ENCODE measurements at regions of chr12 and their contacts with region 1.

Region 1: DNA sequence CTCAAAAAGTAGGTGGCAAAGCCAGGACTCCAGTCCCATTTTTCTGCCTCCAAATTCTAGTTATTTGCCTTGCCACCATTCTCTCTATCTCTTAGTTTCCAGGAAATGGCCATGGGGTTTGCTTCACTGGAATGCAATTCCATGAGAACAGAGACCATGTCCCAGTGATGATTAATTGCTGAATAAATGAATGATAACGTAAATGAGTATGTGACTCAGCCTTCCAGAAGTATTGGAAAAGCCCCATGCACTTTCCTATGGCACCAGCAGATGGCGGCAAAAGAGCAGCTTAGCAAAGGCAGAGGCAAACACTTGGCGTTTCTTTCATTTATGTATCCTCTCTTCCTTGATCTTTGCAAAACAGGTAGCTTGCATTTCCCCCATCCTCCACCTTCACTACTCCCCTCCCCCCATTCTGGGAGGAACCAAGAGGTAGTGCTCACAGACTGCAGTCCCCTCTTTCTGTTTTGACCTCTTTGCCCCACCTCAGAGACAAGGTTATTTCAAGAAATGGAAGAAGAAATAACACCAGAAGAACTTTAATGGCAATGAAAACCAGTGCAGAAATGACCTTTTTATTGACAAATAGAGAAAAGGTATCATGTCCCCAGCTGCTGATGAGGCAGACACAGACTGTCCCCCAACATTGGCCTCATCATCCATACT is 21.3 kb downstream of the TBX3 start:
- DNase-seq: peak; percentile 84
- H3K4me3 ChIP-seq: no peak overlapping the region
- H3K27ac ChIP-seq: no peak overlapping the region
- H3K4me1 ChIP-seq: peaks cover 2% of the 10 kb centered on the region
- H3K27me3 ChIP-seq: peaks cover 22% of the 10 kb centered on the region
- CTCF ChIP-seq: peak; percentile 95

Region 2: DNA sequence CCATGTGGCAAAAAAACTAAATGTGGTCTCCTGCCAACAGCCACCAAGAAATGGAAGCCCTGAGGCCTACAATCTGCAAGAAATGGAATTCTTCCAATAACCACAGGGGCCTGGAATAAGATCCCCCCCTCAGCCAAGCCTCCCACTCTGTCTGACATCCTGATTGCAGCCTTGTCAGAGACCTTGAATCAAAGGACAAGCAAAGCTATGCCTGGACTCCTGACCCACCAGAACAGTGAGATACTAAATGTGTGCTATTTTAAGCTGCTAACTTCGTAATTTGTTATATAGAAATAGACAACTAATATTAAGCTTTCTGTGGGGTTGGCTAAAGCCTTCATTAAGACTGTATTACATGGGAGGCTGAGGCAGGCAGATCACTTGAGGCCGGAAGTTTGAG is 334.4 kb before region 1 on chr12:
- intact Hi-C with region 1: no loop called
- DNase-seq: no peak
- H3K4me3 ChIP-seq: no peak overlapping the region
- H3K27ac ChIP-seq: no peak overlapping the region
- H3K4me1 ChIP-seq: no peaks in the 10 kb centered on the region
- H3K27me3 ChIP-seq: no peaks in the 10 kb centered on the region
- CTCF ChIP-seq: no peak

Region 3: GRCh38 chr12:115166698-115167315 is 504.2 kb after region 1 on chr12:
- intact Hi-C with region 1: loop called (anchors 10 kb)
- DNase-seq: no peak
- H3K4me3 ChIP-seq: no peak overlapping the region
- H3K27ac ChIP-seq: no peak overlapping the region
- H3K4me1 ChIP-seq: no peaks in the 10 kb centered on the region
- H3K27me3 ChIP-seq: no peaks in the 10 kb centered on the region
- CTCF ChIP-seq: no peak

Region 4: DNA sequence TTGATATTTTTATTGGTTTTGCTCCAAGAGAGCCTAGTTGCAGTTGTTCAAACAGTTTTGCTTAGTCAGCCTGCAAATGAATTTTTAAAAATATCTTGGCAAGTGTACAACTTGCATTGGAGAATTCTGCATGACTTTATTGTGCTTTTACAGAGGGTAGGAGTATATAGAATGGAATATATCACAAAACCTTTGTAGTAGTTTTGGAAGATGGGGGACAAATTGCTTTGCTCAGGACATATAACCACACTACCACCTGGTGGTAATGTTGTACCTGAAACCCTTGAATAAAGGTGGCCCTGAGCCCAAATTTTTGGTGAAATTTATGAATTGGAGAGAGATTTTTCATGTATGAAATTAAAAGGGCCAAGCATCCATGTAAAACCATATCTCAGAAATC is 969.7 kb after region 1 on chr12:
- intact Hi-C with region 1: loop called (anchors 10 kb)
- DNase-seq: no peak
- H3K4me3 ChIP-seq: no peak overlapping the region
- H3K27ac ChIP-seq: no peak overlapping the region
- H3K4me1 ChIP-seq: no peaks in the 10 kb centered on the region
- H3K27me3 ChIP-seq: no peaks in the 10 kb centered on the region
- CTCF ChIP-seq: no peak

Region 5: GRCh38 chr12:115752913-115753726 is 1090.5 kb after region 1 on chr12:
- intact Hi-C with region 1: loop called (anchors 1 kb)
- DNase-seq: peak; percentile 36
- H3K4me3 ChIP-seq: no peak overlapping the region
- H3K27ac ChIP-seq: no peak overlapping the region
- H3K4me1 ChIP-seq: no peaks in the 10 kb centered on the region
- H3K27me3 ChIP-seq: no peaks in the 10 kb centered on the region
- CTCF ChIP-seq: peak; percentile 57

Region 6: DNA sequence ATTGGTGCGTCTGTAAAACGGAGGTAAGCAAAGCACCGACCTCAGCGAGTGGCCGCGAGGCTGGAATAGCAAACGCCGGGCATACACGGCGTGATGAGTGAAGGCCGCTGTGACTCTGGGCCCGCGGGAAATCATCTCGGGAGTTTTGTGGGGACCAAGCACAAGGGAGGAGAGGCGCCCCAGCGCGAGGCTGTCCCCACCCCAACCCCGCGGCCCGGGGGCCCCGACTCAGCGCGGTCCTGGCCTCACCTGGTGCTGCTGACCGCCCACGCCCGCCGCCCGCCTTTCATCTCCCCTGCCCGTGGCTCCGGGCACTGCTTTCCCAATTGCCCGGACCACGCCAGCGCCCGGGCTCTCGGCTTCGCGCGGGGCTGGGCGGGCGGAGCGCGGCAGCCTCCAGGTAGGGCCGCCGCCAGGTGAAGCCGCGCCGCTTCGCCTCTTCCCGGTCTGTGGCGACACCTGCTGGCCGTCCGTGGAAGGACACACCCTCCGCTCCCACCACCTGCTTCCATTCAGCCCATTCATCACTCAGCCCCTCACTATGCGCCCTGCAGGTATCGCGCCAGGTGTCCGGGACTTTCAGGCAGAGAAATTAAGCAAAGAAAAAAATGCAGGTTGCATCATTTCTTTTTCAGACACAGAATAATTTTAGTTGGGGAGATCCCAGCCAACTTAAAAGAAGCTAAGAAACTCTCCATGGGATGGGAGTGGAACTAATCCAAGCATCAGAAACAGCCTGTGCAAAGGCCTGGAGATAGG is 1254.4 kb after region 1 on chr12:
- intact Hi-C with region 1: loop called (anchors 5 kb)
- DNase-seq: peak; percentile 78
- H3K4me3 ChIP-seq: no peak overlapping the region
- H3K27ac ChIP-seq: no peak overlapping the region
- H3K4me1 ChIP-seq: no peaks in the 10 kb centered on the region
- H3K27me3 ChIP-seq: peaks cover 6% of the 10 kb centered on the region
- CTCF ChIP-seq: peak; percentile 91